Astrocyte of the cerebellum (primary cell): ENCODE measurements at regions of chr4 and their contacts with region 1.

Region 1: GRCh38 chr4:167168611-167169010 is 65.7 kb downstream of the SPOCK3 start:
- DNase-seq: no peak
- H3K4me3 ChIP-seq: no peak overlapping the region
- CTCF ChIP-seq: no peak

Region 2: GRCh38 chr4:167088115-167088514 is 80.5 kb before region 1 on chr4:
- in situ Hi-C with region 1: no loop called
- DNase-seq: no peak
- H3K4me3 ChIP-seq: no peak overlapping the region
- CTCF ChIP-seq: no peak

Region 3: DNA sequence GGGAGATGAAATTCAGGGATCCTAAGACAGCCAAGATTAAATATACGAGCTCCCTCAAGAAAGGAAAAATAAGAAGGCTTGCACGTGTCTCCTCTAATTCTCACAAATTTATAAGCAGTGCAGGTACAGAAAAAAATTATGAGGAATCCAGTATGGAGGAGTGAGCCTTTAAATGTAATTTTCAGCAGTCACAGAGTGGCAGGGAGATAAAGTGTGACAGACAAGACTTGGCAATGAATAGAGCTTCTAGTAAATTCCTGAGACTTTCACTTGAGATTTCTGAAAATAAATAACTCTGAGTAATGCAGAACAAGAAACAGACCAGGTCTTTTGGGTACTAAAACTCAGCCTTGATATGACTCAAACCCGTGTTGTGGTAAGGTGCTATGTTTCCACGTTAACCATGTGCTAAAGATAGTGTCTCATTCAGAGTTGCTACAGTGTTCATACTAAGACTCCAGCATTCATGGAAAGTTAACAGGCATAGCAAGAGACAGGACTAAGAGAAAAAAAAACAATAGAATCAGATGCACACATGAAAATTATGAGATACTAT is 54.1 kb before region 1 on chr4:
- in situ Hi-C with region 1: no loop called
- DNase-seq: no peak
- H3K4me3 ChIP-seq: no peak overlapping the region
- CTCF ChIP-seq: no peak

Region 4: GRCh38 chr4:167129146-167129545 is 39.5 kb before region 1 on chr4:
- in situ Hi-C with region 1: loop called (anchors 5 kb)
- DNase-seq: no peak
- H3K4me3 ChIP-seq: no peak overlapping the region
- CTCF ChIP-seq: no peak